ENCODE measurements at regions of chr10 and their contacts with region 1.

Region 1: DNA sequence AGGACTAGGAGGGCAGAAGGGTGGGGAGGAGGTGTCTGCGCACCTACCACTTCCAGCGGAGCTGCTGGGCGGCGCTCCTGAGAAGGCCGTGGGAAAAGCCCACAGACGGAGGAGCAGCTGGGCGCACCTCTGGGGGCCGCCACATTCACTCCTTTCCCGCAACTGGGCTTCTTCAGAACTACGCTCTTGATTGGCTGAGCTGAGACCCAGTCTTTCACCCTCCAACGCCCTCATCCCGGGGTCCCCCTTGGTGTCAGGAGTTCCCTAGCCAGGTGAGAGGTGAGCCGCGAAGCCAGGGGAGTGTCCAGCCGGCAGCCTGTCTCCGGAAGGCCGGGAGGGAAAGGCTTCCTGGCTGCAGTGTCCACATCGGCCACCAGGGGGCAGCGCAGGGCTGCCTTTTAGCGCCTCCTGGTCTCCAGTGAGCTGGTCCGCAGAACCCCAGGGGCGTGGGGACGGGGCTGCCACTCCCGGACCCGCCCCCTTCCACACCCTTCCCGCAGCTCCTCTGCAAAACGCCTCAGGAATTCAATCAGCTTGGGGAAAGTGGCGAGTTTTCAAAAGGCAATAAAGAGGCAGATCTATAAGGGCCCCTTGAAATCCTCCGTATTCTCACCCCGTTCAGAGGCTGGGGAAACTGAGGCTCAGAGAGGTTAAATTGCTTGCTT is 98.8 kb downstream of the CHST15 start:
- DNase-seq: peak; percentile 91 to 92
- H3K4me3 ChIP-seq: peak overlapping the region; percentile 16 to 26
- H3K27ac ChIP-seq: no peak overlapping the region
- H3K4me1 ChIP-seq: peaks cover 23% of the 10 kb centered on the region
- H3K27me3 ChIP-seq: peaks cover 5% of the 10 kb centered on the region
- CTCF ChIP-seq: peak; percentile 88 to 100 (median 99)
- POLR2A ChIP-seq: peak in 1 of 2 donors; percentile 6

Region 2: DNA sequence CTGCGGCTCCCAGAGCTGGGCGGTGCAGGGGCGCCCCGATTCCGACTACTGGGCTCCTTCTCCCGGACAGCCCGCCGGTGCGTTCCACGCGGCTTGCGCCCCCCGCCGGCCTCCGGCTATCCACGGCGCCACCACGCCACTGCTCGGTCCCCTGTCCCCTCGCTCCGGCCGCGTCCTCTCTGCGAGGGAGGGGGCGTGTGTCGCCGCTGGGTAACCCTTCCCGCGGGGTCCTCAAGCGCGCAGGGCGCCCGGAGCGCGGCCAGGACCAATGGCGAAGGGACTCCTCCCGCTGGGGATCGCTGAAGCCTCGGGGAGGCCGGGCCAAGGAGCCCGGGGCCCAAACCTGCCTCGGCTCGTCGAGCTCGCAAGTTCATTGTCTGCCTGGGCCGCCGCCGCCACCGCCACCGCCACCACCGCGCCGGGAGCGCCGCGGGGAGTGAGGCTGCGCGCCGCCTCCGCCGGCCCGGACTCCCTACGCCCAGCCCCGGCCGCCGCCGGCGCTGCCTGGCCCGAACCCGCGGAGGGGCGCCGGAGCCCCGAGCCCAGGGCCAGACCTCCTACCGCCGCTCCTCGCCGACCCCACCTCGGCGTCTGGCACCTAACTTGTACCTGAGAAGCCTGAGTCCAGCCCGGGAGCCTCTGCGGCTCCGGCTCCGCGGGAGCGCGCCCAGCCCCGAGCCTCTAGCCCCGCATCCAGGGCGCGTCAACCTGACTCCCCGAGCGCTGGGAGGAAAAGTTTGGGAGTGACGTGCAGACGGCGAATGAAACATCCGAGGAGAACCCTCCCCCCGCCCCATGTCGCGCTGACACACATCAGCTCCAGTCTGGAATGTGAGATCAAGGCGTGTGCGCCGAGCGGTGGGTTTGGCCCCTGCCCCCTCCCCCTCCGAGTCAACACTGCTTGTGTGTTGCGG is 98.6 kb after region 1 on chr10 and contains the start of gene CHST15:
- intact Hi-C with region 1: loop called (anchors 5 kb)
- DNase-seq: no peak
- H3K4me3 ChIP-seq: peak within 1 kb of the TSS; percentile 61 to 91
- H3K27ac ChIP-seq: peak within 1 kb of the TSS; percentile 86
- H3K4me1 ChIP-seq: peaks cover 40% of the 10 kb centered on the region
- H3K27me3 ChIP-seq: no peaks in the 10 kb centered on the region
- CTCF ChIP-seq: no peak
- POLR2A ChIP-seq: peak in 1 of 2 donors; percentile 64
- total RNA-seq, gene CHST15: 27.0 TPM

Region 3: GRCh38 chr10:124152916-124153826 is 158.6 kb after region 1 on chr10:
- intact Hi-C with region 1: loop called (anchors 10 kb)
- DNase-seq: no peak
- H3K4me3 ChIP-seq: no peak overlapping the region
- H3K27ac ChIP-seq: peak overlapping the region; percentile 53
- H3K4me1 ChIP-seq: peaks cover 35% of the 10 kb centered on the region
- H3K27me3 ChIP-seq: no peaks in the 10 kb centered on the region
- CTCF ChIP-seq: no peak
- POLR2A ChIP-seq: no peak

Region 4: GRCh38 chr10:124388823-124389612 is 394.5 kb after region 1 on chr10:
- intact Hi-C with region 1: loop called (anchors 1 kb)
- DNase-seq: no peak
- H3K4me3 ChIP-seq: peak overlapping the region; percentile 42 to 54
- H3K27ac ChIP-seq: peak overlapping the region; percentile 60
- H3K4me1 ChIP-seq: peaks cover 10% of the 10 kb centered on the region
- H3K27me3 ChIP-seq: no peaks in the 10 kb centered on the region
- CTCF ChIP-seq: peak; percentile 91 to 100 (median 97)
- POLR2A ChIP-seq: no peak